CD4-positive, alpha-beta T cell (primary cell): ENCODE measurements at regions of chr15 and their contacts with region 1.

Region 1: GRCh38 chr15:55494931-55495330 is 13.1 kb downstream of the DNAAF4 start:
- DNase-seq: peak in 3 of 14 experiments; percentile 9 to 41 (median 32)
- ATAC-seq: no peak
- H3K4me3 ChIP-seq: no peak overlapping the region
- H3K4me3 Mint-ChIP-seq: no peak overlapping the region
- H3K27ac ChIP-seq: no peak overlapping the region
- H3K27ac Mint-ChIP-seq: no peak overlapping the region
- H3K4me1 ChIP-seq: peaks cover 9% of the 10 kb centered on the region
- H3K4me1 Mint-ChIP-seq: peaks cover 9% of the 10 kb centered on the region
- H3K27me3 ChIP-seq: no peaks in the 10 kb centered on the region
- H3K27me3 Mint-ChIP-seq: no peaks in the 10 kb centered on the region
- CTCF ChIP-seq: no peak

Region 2: GRCh38 chr15:55202206-55202605 is 292.7 kb before region 1 on chr15:
- CTCF ChIA-PET with region 1: no interaction called
- POLR2A ChIA-PET with region 1: no interaction called
- intact Hi-C with region 1: loop called in 1 of 2 experiments (anchors 10 kb)
- DNase-seq: no peak
- ATAC-seq: no peak
- H3K4me3 ChIP-seq: no peak overlapping the region
- H3K4me3 Mint-ChIP-seq: no peak overlapping the region
- H3K27ac ChIP-seq: no peak overlapping the region
- H3K27ac Mint-ChIP-seq: no peak overlapping the region
- H3K4me1 ChIP-seq: peaks cover 4% of the 10 kb centered on the region
- H3K4me1 Mint-ChIP-seq: peaks cover 11% of the 10 kb centered on the region
- H3K27me3 ChIP-seq: no peaks in the 10 kb centered on the region
- H3K27me3 Mint-ChIP-seq: no peaks in the 10 kb centered on the region
- CTCF ChIP-seq: no peak

Region 3: DNA sequence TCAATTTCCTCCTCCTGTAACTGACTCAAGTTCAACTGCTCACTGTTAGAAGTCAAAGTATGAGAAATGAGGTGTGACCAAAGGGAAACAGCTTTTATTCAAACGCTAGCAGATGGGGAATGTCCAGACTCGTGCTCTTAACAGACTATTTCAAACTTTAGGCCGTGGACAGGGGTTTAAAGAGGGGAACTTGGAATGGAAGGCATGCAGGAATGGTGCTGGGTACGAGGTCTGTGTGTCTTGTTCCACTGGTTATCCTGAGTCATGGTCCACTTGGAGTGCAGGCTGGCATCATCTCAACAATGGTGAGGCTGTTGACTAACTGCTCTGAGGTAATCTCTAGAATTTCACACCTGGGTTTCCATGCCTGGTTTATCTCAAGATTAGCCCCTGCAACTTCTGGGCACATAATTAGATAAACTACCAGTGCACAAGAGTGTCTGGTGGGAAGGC is 36.0 kb after region 1 on chr15:
- CTCF ChIA-PET with region 1: no interaction called
- POLR2A ChIA-PET with region 1: no interaction called
- intact Hi-C with region 1: no loop called
- DNase-seq: no peak
- ATAC-seq: no peak
- H3K4me3 ChIP-seq: no peak overlapping the region
- H3K4me3 Mint-ChIP-seq: no peak overlapping the region
- H3K27ac ChIP-seq: no peak overlapping the region
- H3K27ac Mint-ChIP-seq: no peak overlapping the region
- H3K4me1 ChIP-seq: peaks cover 3% of the 10 kb centered on the region
- H3K4me1 Mint-ChIP-seq: no peaks in the 10 kb centered on the region
- H3K27me3 ChIP-seq: no peaks in the 10 kb centered on the region
- H3K27me3 Mint-ChIP-seq: peaks cover 11% of the 10 kb centered on the region
- CTCF ChIP-seq: no peak